PC-3 (cell line): ENCODE measurements at regions of chr13 and their contacts with region 1.

Region 1: DNA sequence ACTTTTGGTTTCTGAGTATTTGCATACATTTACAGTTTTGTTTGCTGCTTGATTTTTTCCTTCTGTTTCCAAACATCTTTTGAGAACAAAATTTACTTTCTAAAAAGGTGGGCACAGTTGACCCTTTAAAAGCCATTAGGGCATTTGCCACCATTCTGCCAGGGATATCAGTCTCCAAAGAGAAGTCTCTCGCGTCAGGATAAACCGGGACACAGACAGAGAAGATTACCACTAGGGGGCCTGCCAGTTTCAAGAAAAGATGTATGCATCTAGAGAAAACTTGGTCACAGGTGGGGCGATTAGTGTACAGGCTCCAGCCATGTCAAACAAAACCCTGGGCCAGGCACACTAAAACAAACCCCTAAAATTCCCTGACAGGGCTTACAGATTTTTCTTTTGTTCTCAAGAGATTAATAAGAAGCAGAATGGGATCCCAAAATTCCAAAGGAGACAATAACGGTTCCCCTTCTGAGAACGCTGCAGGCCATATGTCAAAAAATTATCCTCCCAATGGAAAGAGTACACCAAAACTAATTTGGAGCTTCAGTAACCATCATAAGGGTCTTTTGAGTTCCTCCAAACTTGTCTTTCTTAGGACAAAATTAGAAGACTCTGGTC is 10.7 kb upstream of the PABPC3 start:
- DNase-seq: peak; percentile 63
- ATAC-seq: peak; percentile 83
- H3K4me3 ChIP-seq: no peak overlapping the region
- H3K27ac ChIP-seq: no peak overlapping the region
- H3K4me1 ChIP-seq: no peaks in the 10 kb centered on the region
- H3K27me3 ChIP-seq: peaks cover 27% of the 10 kb centered on the region
- CTCF ChIP-seq: peak; percentile 78

Region 2: DNA sequence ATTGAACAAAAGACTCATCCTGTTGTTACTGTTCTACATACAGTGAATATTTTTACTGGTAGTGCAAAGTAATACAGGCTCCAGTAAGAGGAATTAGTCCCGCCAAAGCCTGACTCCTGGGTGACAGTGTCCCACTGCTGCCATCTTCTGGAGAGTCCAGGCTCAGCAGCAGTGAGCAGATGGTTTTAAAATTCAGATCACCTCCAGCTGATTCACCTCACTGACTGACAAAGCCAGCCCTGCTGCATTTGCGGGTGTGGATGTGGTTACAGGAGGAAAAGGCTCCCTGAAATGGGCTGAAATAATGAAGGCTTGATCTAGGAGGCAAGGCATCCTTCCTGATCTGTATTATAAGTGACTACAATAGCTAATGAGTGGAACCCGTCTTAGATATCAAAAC is 29.0 kb after region 1 on chr13:
- CTCF ChIA-PET with region 1: no interaction called
- POLR2A ChIA-PET with region 1: no interaction called
- intact Hi-C with region 1: loop called (anchors 1 kb)
- DNase-seq: peak; percentile 81
- ATAC-seq: peak; percentile 97
- H3K4me3 ChIP-seq: no peak overlapping the region
- H3K27ac ChIP-seq: no peak overlapping the region
- H3K4me1 ChIP-seq: no peaks in the 10 kb centered on the region
- H3K27me3 ChIP-seq: peaks cover 32% of the 10 kb centered on the region
- CTCF ChIP-seq: peak; percentile 84

Region 3: DNA sequence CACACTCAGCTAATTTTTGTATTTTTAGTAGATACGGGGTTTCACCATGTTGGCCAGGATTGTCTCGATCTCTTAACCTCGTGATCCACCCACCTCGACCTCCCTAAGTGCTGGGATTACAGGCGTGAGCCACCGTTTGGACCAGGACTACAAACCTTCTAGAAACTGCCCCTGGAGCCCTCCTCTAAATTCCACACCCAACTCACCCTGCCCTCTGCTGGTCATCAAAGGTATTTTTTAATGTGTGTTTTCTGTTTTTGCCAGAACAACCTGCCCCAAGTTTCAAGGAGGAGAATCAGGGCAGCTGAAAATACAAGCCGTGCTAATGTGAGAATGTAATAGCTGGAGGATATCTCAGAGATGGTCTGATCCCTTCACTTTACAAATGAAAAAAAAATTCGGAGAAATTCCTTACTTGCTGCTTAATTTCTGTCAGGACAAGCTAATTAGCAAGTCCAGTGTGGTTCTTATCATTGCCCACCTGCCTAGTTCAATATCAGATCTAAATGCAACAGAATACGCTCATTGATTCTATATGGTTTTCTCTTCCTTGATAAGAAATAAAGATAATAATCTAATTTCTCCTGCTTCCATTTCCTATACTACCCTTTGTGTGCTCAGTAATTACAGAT is 290.6 kb after region 1 on chr13:
- CTCF ChIA-PET with region 1: no interaction called
- POLR2A ChIA-PET with region 1: no interaction called
- intact Hi-C with region 1: loop called (anchors 1 kb)
- DNase-seq: peak; percentile 63
- ATAC-seq: peak; percentile 38; the same call in 1 of the 2 replicates
- H3K4me3 ChIP-seq: no peak overlapping the region
- H3K27ac ChIP-seq: no peak overlapping the region
- H3K4me1 ChIP-seq: no peaks in the 10 kb centered on the region
- H3K27me3 ChIP-seq: peaks cover 66% of the 10 kb centered on the region
- CTCF ChIP-seq: peak; percentile 61